HepG2 (cell line): ENCODE measurements at regions of chr10 and their contacts with region 1.

Region 1: DNA sequence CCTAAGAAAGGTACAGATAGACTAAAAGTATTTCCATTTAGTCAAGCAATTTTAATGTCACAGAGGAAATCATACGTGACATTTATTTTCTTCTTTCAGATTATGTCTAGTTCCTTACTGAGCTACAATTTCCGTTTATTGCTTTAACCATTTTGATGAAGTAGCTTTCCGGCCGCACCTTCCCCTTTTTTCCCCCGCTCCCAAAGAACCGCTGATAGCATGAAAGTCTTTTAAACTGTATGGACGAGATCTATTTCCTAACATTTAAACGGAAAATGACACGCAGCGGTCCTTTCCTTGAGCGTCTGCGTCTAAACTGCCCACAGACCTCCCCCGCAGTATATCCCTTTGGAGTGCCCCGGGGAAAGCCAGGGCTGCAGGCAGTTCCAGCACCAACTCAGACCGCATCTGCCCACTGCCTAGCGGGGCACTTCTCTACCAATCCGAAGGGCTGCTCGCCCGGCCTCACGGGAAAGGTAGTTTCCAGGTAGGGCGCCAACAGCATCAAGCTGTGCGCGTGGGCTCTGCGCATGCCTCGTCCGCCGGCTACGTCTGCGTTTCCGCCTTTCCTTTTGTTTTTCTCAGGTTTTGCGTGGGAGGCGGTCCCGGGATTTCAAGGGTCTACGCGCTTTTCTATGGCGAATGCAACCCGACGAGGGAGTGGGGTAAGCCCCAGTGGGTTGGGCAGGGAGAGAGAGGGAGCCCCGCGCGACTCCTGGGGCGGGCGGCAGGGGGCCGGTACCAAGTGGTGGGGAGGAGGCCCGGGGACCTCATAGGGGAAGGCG is at the start of gene ZNF33A:
- DNase-seq: peak; percentile 90
- ATAC-seq: peak; percentile 97
- H3K4me3 ChIP-seq: peak within 1 kb of the TSS; percentile 70 to 79 (median 78)
- H3K27ac ChIP-seq: peak within 1 kb of the TSS; percentile 91
- H3K4me1 ChIP-seq: peaks cover 17% of the 10 kb centered on the region
- H3K27me3 ChIP-seq: no peaks in the 10 kb centered on the region
- CTCF ChIP-seq: no peak
- EP300 ChIP-seq: no peak
- POLR2A ChIP-seq: peak in 1 of 2 experiments; percentile 79; a peak in 2 of 4 replicates
- RAD21 ChIP-seq: no peak
- total RNA-seq, gene ZNF33A: 22.5 and 35.5 TPM in 2 replicates

Region 2: GRCh38 chr10:37857287-37858211 is 152.8 kb before region 1 on chr10 and contains the start of gene ZNF248:
- CTCF ChIA-PET with region 1: no interaction called
- POLR2A ChIA-PET with region 1: no interaction called
- in situ Hi-C with region 1: no loop called
- intact Hi-C with region 1: loop called (anchors 10 kb)
- DNase-seq: peak; percentile 93
- ATAC-seq: peak; percentile 96
- H3K4me3 ChIP-seq: peak within 1 kb of the TSS; percentile 71 to 91 (median 73)
- H3K27ac ChIP-seq: peak within 1 kb of the TSS; percentile 98
- H3K4me1 ChIP-seq: peaks cover 53% of the 10 kb centered on the region
- H3K27me3 ChIP-seq: no peaks in the 10 kb centered on the region; a peak in 2 of 5 replicates
- CTCF ChIP-seq: peak; percentile 36; the same call in 1 of the 2 replicates
- EP300 ChIP-seq: no peak
- POLR2A ChIP-seq: peak; percentile 98 to 99
- RAD21 ChIP-seq: peak; percentile 45
- total RNA-seq, gene ZNF248: 12.5 and 12.8 TPM in 2 replicates

Region 3: DNA sequence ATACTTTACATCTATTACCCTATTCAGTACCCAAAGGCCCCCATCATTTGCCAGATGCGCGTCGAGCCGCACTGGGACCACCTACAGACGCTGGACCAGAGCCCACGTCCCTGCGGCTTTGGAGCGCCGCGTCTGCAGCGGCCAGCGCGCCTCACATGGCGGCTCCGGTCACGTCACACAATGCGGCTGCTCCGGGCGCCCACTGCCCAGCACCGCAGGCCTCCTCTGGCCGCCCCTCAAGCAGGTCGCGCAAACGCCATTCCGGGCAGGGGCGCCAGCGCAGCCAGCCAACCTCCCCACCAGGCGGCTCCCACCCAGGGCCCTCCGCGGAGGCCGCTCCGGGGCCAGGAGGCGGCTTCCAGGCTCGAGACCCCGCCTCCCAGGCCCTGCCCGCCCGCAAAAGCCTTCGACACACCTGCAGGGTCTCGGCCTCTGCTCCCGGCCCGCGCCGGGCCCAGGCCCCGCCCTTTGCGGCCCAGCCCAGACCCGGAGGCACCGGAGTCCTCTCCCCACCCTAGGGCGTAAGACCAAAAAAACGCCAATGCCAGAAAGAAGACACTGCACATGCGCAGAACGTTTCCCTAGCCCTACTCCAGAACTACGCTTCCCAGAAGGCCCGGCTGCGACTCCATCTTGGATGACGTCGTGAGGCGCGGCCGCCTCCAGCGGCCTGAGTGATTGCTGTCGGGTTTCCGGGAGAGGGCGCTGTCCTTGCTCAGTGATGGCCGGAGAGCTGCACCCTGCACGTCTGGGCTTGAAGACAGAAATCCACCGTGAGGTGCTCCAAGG is 34.0 kb before region 1 on chr10 and contains the start of gene ZNF25:
- CTCF ChIA-PET with region 1: interaction called, 3 read pairs
- POLR2A ChIA-PET with region 1: interaction called, 17 read pairs
- in situ Hi-C with region 1: no loop called
- intact Hi-C with region 1: loop called (anchors 1 kb)
- DNase-seq: peak; percentile 99
- ATAC-seq: peak; percentile 97
- H3K4me3 ChIP-seq: peak within 1 kb of the TSS; percentile 66 to 90 (median 80)
- H3K27ac ChIP-seq: peak within 1 kb of the TSS; percentile 84
- H3K4me1 ChIP-seq: peaks cover 10% of the 10 kb centered on the region
- H3K27me3 ChIP-seq: no peaks in the 10 kb centered on the region
- CTCF ChIP-seq: peak; percentile 98
- EP300 ChIP-seq: peak in 1 of 2 experiments; percentile 32; a peak in 1 of 4 replicates
- POLR2A ChIP-seq: peak; percentile 77 to 91
- RAD21 ChIP-seq: peak; percentile 53
- total RNA-seq, gene ZNF25: 1.4 and 1.6 TPM in 2 replicates

Region 4: GRCh38 chr10:37991655-37992054 is 18.7 kb before region 1 on chr10:
- CTCF ChIA-PET with region 1: no interaction called
- POLR2A ChIA-PET with region 1: interaction called, 8 read pairs
- in situ Hi-C with region 1: no loop called
- intact Hi-C with region 1: loop called (anchors 2 kb)
- DNase-seq: no peak
- ATAC-seq: no peak
- H3K4me3 ChIP-seq: no peak overlapping the region
- H3K27ac ChIP-seq: no peak overlapping the region
- H3K4me1 ChIP-seq: no peaks in the 10 kb centered on the region
- H3K27me3 ChIP-seq: no peaks in the 10 kb centered on the region
- CTCF ChIP-seq: no peak
- EP300 ChIP-seq: no peak
- POLR2A ChIP-seq: no peak
- RAD21 ChIP-seq: no peak

Region 5: GRCh38 chr10:38094158-38094920 is 84.0 kb after region 1 on chr10 and contains the start of gene ZNF37A:
- CTCF ChIA-PET with region 1: no interaction called
- POLR2A ChIA-PET with region 1: interaction called, 3 read pairs
- in situ Hi-C with region 1: no loop called
- intact Hi-C with region 1: loop called (anchors 10 kb)
- DNase-seq: peak; percentile 94
- ATAC-seq: peak; percentile 98
- H3K4me3 ChIP-seq: peak within 1 kb of the TSS; percentile 77 to 92 (median 80)
- H3K27ac ChIP-seq: peak within 1 kb of the TSS; percentile 75
- H3K4me1 ChIP-seq: peaks cover 43% of the 10 kb centered on the region
- H3K27me3 ChIP-seq: no peaks in the 10 kb centered on the region; a peak in 1 of 5 replicates
- CTCF ChIP-seq: peak; percentile 11; the same call in 1 of the 2 replicates
- EP300 ChIP-seq: no peak
- POLR2A ChIP-seq: peak; percentile 62 to 64
- RAD21 ChIP-seq: 0 out of 2 replicates have a peak, but pooled peaks have one; percentile 24
- total RNA-seq, gene ZNF37A: 12.6 and 17.0 TPM in 2 replicates